Naive thymus-derived CD4-positive, alpha-beta T cell (primary cell): ENCODE measurements at regions of chr4 and their contacts with region 1.

Region 1: DNA sequence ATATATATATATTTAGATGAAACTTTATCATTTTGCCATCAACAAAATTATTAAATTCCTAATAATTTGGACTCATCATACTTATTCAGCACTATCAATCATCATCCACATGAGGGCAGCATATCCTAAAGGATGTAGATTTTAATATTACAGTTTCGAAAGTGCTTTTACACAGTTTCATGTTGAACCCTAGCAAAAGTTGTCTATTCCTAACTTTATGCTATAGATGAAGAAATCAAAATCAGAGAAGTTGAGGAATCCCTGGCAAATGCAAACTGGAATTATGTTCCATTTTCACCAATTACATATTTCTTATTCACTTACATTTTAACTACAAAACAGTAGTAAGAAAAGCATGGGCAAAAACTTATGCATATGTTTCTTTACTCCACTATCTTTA is 36.6 kb upstream of the UGT2A1 start:
- DNase-seq: peak in 6 of 9 donors; percentile 20 to 63 (median 48)
- ATAC-seq: peak; percentile 76
- H3K4me3 ChIP-seq: no peak overlapping the region
- H3K4me3 Mint-ChIP-seq: peak overlapping the region in 7 of 10 donors; percentile 39 to 76 (median 55)
- H3K27ac ChIP-seq: no peak overlapping the region
- H3K27ac Mint-ChIP-seq: peak overlapping the region in 3 of 9 donors; percentile 30 to 53 (median 38)
- H3K4me1 ChIP-seq: no peaks in the 10 kb centered on the region
- H3K4me1 Mint-ChIP-seq: peaks cover 0 to 19% (median 5%) of the 10 kb centered on the region in 7 donors
- H3K27me3 ChIP-seq: no peaks in the 10 kb centered on the region
- H3K27me3 Mint-ChIP-seq: no peaks in the 10 kb centered on the region

Region 2: GRCh38 chr4:68498413-68499007 is 1191.1 kb before region 1 on chr4:
- CTCF ChIA-PET with region 1: no interaction called
- POLR2A ChIA-PET with region 1: no interaction called
- intact Hi-C with region 1: loop called in 1 of 2 experiments (anchors 5 kb)
- DNase-seq: peak in 8 of 9 donors; percentile 28 to 67 (median 46)
- ATAC-seq: peak; percentile 94
- H3K4me3 ChIP-seq: no peak overlapping the region
- H3K4me3 Mint-ChIP-seq: no peak overlapping the region
- H3K27ac ChIP-seq: no peak overlapping the region
- H3K27ac Mint-ChIP-seq: no peak overlapping the region
- H3K4me1 ChIP-seq: no peaks in the 10 kb centered on the region
- H3K4me1 Mint-ChIP-seq: peaks cover 4 to 22% (median 11%) of the 10 kb centered on the region in 7 donors
- H3K27me3 ChIP-seq: no peaks in the 10 kb centered on the region
- H3K27me3 Mint-ChIP-seq: peaks cover 0 to 4% (median 0%) of the 10 kb centered on the region in 5 donors

Region 3: GRCh38 chr4:69881173-69881773 is 191.7 kb after region 1 on chr4:
- CTCF ChIA-PET with region 1: interaction called, 17 read pairs
- POLR2A ChIA-PET with region 1: no interaction called
- intact Hi-C with region 1: loop called (anchors 1 kb)
- DNase-seq: peak in 7 of 9 donors; percentile 25 to 62 (median 48)
- ATAC-seq: peak; percentile 90
- H3K4me3 ChIP-seq: no peak overlapping the region
- H3K4me3 Mint-ChIP-seq: no peak overlapping the region
- H3K27ac ChIP-seq: no peak overlapping the region
- H3K27ac Mint-ChIP-seq: no peak overlapping the region
- H3K4me1 ChIP-seq: no peaks in the 10 kb centered on the region
- H3K4me1 Mint-ChIP-seq: no peaks in the 10 kb centered on the region
- H3K27me3 ChIP-seq: no peaks in the 10 kb centered on the region
- H3K27me3 Mint-ChIP-seq: peaks cover 0 to 8% (median 6%) of the 10 kb centered on the region in 5 donors

Region 4: DNA sequence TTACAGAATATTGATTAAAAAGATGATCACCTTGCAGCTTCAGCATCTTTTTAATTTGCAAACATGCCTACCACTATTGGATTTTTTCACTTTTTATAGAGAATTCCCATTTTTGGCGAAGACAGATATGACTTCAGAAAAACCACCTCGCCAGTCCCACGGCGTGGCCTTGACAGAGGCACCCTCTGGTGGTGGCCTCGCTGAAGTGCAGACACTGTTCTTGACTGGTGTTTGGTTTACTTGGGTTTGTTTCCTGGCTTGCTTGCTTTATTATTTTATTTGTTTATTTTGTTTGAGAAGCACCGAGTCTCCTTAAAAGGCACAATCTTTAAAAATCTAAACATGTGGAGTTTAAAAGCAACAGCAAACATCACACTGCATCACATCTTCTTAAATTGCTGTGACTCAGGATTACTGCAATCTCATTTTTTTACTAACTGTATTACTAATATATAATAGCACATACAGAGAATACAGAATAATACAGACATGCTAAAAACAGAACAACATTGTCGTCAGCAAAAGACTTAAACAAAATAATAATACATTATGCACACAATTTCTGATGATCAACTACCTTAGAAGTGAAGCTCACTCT is 815.7 kb after region 1 on chr4:
- CTCF ChIA-PET with region 1: no interaction called
- POLR2A ChIA-PET with region 1: no interaction called
- intact Hi-C with region 1: loop called in 1 of 2 experiments (anchors 1 kb)
- DNase-seq: peak in 7 of 9 donors; percentile 19 to 49 (median 31)
- ATAC-seq: peak; percentile 73
- H3K4me3 ChIP-seq: no peak overlapping the region
- H3K4me3 Mint-ChIP-seq: no peak overlapping the region
- H3K27ac ChIP-seq: no peak overlapping the region
- H3K27ac Mint-ChIP-seq: no peak overlapping the region
- H3K4me1 ChIP-seq: no peaks in the 10 kb centered on the region
- H3K4me1 Mint-ChIP-seq: no peaks in the 10 kb centered on the region
- H3K27me3 ChIP-seq: no peaks in the 10 kb centered on the region
- H3K27me3 Mint-ChIP-seq: no peaks in the 10 kb centered on the region

Region 5: DNA sequence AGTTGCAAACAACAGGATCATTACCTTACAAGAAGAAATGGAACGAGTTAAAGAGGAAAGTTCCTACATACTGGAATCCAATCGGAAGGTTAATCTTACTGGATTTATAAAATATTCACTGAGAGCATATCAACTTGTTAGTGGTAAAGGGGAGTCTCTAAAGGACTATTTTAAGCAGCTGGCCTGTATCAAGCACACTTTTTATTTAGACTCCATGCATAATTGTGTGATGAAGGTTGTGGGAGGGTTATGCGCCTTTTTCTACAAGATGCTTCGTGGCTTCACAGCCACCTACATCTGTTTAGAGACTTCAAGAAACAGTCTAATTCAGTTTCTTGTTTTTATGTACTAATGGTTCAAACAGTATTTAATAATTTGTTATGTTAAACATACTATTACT is 1093.5 kb after region 1 on chr4:
- CTCF ChIA-PET with region 1: no interaction called
- POLR2A ChIA-PET with region 1: no interaction called
- intact Hi-C with region 1: no loop called
- DNase-seq: no peak
- ATAC-seq: no peak
- H3K4me3 ChIP-seq: no peak overlapping the region
- H3K4me3 Mint-ChIP-seq: no peak overlapping the region
- H3K27ac ChIP-seq: no peak overlapping the region
- H3K27ac Mint-ChIP-seq: no peak overlapping the region
- H3K4me1 ChIP-seq: no peaks in the 10 kb centered on the region
- H3K4me1 Mint-ChIP-seq: peaks cover 0 to 2% (median 0%) of the 10 kb centered on the region in 7 donors
- H3K27me3 ChIP-seq: no peaks in the 10 kb centered on the region
- H3K27me3 Mint-ChIP-seq: no peaks in the 10 kb centered on the region